Aorta (tissue), 5 donors: ENCODE measurements at regions of chr9 and their contacts with region 1.

Region 1: DNA sequence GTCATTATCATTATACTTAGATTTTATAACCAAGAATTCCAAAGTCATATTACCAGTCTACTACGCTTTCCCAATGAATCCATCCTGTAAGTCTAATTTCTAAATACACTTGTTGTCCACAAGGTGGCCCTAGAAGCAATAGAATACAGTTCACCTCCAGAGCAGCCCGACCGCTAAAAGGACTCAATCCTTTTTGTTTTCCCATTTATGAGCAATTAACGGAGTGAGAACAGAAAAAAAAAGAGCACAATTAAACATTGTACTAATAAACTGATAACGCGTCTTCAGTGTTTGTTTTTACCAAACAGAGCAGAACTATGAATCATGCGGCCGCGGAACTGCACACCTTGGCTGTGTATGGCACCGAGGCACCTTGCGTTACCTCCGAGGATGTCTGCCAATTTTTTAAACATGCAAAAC is 160.7 kb upstream of the DAPK1 start:
- DNase-seq: no peak
- ATAC-seq: peak; percentile 81
- H3K4me3 ChIP-seq: peak overlapping the region; percentile 51 to 88
- H3K27ac ChIP-seq: no peak overlapping the region
- H3K4me1 ChIP-seq: no peaks in the 10 kb centered on the region
- H3K27me3 ChIP-seq: no peaks in the 10 kb centered on the region

Region 2: GRCh38 chr9:87656485-87656884 is 319.6 kb after region 1 on chr9:
- intact Hi-C with region 1: loop called in 1 of 2 experiments (anchors 5 kb)
- DNase-seq: no peak
- ATAC-seq: peak; percentile 52
- H3K4me3 ChIP-seq: no peak overlapping the region
- H3K27ac ChIP-seq: no peak overlapping the region
- H3K4me1 ChIP-seq: no peaks in the 10 kb centered on the region
- H3K27me3 ChIP-seq: no peaks in the 10 kb centered on the region

Region 3: GRCh38 chr9:87670572-87671264 is 333.8 kb after region 1 on chr9:
- intact Hi-C with region 1: no loop called
- DNase-seq: no peak
- ATAC-seq: no peak
- H3K4me3 ChIP-seq: no peak overlapping the region
- H3K27ac ChIP-seq: no peak overlapping the region
- H3K4me1 ChIP-seq: no peaks in the 10 kb centered on the region
- H3K27me3 ChIP-seq: no peaks in the 10 kb centered on the region